IMR-90 (cell line): ENCODE measurements at regions of chr1 and their contacts with region 1.

Region 1: DNA sequence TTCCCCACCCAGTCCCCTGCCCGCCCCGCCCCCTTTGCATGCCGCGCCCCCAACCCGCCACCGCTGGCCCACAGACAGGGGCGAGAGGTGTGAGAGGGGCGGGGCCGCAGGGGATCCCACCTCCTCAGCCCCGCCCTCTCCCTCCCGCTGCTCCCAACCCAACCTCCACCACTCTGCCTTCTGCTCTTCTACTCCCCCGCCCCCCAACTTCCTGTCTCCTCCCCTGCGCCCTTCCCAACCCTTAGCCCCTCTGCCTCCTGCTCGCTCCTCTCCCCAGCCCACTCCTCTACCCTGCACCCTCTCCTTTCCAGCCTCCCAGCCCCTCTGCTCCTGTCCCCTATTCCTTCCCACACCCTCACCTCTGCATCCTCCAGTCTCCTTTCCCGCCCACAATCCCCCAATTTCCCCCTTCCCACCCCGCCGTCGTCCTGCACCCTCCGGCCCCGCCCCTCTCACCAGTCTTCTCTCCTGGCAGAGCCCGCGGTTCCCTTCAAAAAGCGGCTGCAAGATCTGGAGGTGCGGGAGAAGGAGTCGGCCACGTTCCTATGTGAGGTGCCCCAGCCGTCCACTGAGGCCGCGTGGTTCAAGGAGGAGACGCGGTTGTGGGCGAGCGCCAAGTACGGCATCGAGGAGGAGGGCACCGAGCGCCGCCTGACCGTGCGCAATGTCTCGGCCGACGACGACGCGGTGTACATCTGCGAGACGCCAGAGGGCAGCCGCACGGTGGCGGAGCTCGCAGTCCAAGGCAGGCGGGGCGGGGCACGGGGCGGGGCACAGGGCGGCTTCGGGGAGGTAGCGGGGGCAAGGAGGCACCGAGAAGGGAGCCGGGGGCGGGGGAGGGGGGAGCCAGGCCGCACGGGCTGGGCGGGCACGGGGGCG is 5.4 kb downstream of the OBSCN start:
- DNase-seq: peak; percentile 78
- ATAC-seq: peak; percentile 96
- H3K4me3 ChIP-seq: peak overlapping the region; percentile 92
- H3K27ac ChIP-seq: peak overlapping the region; percentile 93
- H3K4me1 ChIP-seq: peaks cover 10% of the 10 kb centered on the region; the same call in 1 of the 2 replicates
- H3K27me3 ChIP-seq: no peaks in the 10 kb centered on the region; the same call in 1 of the 2 replicates
- CTCF ChIP-seq: peak; percentile 74
- POLR2A ChIP-seq: no peak
- RAD21 ChIP-seq: peak; percentile 67

Region 2: DNA sequence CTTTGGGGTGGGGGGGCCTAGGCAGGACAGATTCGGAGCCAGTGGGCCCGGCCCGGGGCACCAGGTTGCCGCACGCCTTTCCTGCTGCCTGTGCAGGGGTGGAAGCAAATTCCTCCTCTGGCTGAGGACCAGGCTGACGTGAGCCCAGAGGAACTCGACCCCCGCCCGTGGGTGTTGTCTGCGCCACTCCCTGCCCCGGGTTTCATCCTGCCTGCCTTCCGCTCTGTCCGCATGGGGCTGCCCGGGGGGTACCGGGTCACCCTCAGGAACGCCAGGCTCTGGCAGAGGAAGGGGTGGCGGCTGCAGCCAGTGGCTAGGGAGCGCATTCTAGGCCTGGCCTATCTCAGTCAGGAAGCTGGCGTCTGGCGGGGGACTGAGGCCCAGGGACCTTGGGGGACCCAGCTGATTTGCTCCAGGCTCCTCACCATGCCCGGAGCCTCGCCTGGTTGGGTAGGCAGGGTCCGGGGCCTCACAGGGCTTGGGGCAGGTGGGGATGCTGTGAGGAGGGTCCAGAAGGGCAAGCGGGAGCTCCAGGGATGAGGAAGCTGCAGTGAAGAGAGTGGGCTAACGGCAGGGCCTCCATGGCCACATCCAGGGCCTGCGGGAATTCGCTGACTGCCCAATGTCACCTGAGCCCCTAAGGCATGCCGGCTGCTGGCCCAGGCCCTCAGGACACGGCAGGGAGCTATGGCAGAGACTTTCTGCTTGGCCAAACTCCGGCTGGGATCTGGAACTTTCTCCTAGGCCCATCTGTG is 50.0 kb before region 1 on chr1:
- CTCF ChIA-PET with region 1: no interaction called
- POLR2A ChIA-PET with region 1: no interaction called
- dilution Hi-C with region 1: no loop called
- in situ Hi-C with region 1: no loop called
- intact Hi-C with region 1: no loop called
- DNase-seq: no peak
- ATAC-seq: no peak
- H3K4me3 ChIP-seq: no peak overlapping the region
- H3K27ac ChIP-seq: no peak overlapping the region
- H3K4me1 ChIP-seq: peaks cover 12% of the 10 kb centered on the region
- H3K27me3 ChIP-seq: no peaks in the 10 kb centered on the region
- CTCF ChIP-seq: no peak
- POLR2A ChIP-seq: no peak
- RAD21 ChIP-seq: no peak

Region 3: GRCh38 chr1:228265167-228265566 is 52.0 kb after region 1 on chr1:
- CTCF ChIA-PET with region 1: no interaction called
- POLR2A ChIA-PET with region 1: no interaction called
- dilution Hi-C with region 1: no loop called
- in situ Hi-C with region 1: no loop called
- intact Hi-C with region 1: loop called (anchors 1 kb)
- DNase-seq: peak; percentile 33
- ATAC-seq: peak; percentile 88
- H3K4me3 ChIP-seq: no peak overlapping the region
- H3K27ac ChIP-seq: no peak overlapping the region
- H3K4me1 ChIP-seq: peaks cover 5% of the 10 kb centered on the region
- H3K27me3 ChIP-seq: no peaks in the 10 kb centered on the region
- CTCF ChIP-seq: peak; percentile 30; the same call in 1 of the 2 replicates
- POLR2A ChIP-seq: no peak
- RAD21 ChIP-seq: peak; percentile 36

Region 4: GRCh38 chr1:228393248-228393699 is 180.1 kb after region 1 on chr1:
- CTCF ChIA-PET with region 1: no interaction called
- POLR2A ChIA-PET with region 1: no interaction called
- dilution Hi-C with region 1: no loop called
- in situ Hi-C with region 1: no loop called
- intact Hi-C with region 1: loop called (anchors 1 kb)
- DNase-seq: peak; percentile 73
- ATAC-seq: peak; percentile 90
- H3K4me3 ChIP-seq: no peak overlapping the region
- H3K27ac ChIP-seq: peak overlapping the region; percentile 39; the same call in 1 of the 2 replicates
- H3K4me1 ChIP-seq: peaks cover 20% of the 10 kb centered on the region
- H3K27me3 ChIP-seq: no peaks in the 10 kb centered on the region
- CTCF ChIP-seq: peak; percentile 60
- POLR2A ChIP-seq: no peak
- RAD21 ChIP-seq: peak; percentile 46

Region 5: DNA sequence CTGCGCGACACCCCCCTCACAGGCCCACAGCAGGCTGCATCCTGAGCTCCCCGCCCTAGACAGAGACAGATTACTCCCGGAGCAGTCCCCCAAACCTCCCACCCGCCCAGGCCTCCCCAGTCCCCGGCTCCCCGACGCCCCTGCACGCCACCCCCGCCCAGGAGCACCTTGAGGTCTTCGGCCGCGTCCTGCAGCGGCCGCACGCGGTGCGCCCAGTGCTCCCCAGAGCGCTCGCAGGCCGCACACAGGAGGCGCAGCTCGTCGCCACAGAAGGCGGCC is 192.7 kb after region 1 on chr1:
- CTCF ChIA-PET with region 1: interaction called, 3 read pairs
- POLR2A ChIA-PET with region 1: no interaction called
- dilution Hi-C with region 1: no loop called
- in situ Hi-C with region 1: no loop called
- intact Hi-C with region 1: loop called (anchors 1 kb)
- DNase-seq: peak; percentile 17
- ATAC-seq: peak; percentile 25
- H3K4me3 ChIP-seq: peak overlapping the region; percentile 73
- H3K27ac ChIP-seq: peak overlapping the region; percentile 86
- H3K4me1 ChIP-seq: peaks cover 17% of the 10 kb centered on the region
- H3K27me3 ChIP-seq: no peaks in the 10 kb centered on the region
- CTCF ChIP-seq: no peak
- POLR2A ChIP-seq: no peak
- RAD21 ChIP-seq: no peak

Region 6: GRCh38 chr1:228434686-228435085 is 221.5 kb after region 1 on chr1:
- CTCF ChIA-PET with region 1: no interaction called
- POLR2A ChIA-PET with region 1: no interaction called
- dilution Hi-C with region 1: no loop called
- in situ Hi-C with region 1: no loop called
- intact Hi-C with region 1: no loop called
- DNase-seq: no peak
- ATAC-seq: no peak
- H3K4me3 ChIP-seq: no peak overlapping the region
- H3K27ac ChIP-seq: no peak overlapping the region
- H3K4me1 ChIP-seq: no peaks in the 10 kb centered on the region
- H3K27me3 ChIP-seq: peaks cover 17% of the 10 kb centered on the region
- CTCF ChIP-seq: no peak
- POLR2A ChIP-seq: no peak
- RAD21 ChIP-seq: no peak